ENCODE measurements at regions of chr17 and their contacts with region 1.

Region 1: DNA sequence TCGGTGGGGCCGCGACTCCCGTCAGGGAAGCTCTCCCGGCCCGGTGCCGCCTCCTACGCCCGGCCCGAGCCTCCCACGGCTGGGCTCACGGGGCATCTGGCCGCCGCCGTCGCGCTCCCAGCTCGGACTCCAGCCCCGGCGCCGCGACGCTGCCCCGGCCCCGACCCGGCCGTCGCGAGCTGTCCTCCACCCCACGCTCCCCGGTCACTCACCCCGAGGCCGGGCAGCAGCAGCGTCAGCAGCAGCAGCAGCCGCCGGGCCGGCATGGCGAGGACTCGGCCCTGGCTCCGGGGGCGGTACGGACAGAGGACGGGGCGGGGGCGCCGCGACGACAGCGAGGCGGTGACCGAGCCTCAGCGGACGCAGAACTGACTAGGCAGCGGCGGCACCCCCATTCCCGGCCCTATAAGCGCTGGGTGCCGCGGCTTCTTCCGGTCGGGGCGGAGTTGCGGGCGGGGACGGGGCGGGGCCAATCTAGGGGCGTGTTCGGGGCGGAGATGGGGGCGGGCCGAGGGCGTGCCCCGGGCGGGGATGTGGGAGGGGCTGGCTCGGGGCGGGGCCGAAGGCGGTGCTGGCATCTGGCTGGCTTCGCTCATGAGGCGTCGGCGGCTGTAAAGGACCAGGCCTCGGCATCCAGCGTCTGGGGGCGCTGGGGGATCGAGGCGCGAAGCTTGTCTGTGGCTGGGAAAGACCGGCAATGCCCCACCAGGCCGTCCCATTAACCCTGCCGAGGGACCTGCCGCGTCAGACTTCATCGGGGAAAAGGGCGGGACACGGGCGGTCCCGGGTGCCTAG is at the start of gene ERN1:
- DNase-seq: peak; percentile 82
- H3K4me3 ChIP-seq: peak within 1 kb of the TSS; percentile 68
- H3K27ac ChIP-seq: peak within 1 kb of the TSS; percentile 93
- H3K27me3 ChIP-seq: no peaks in the 10 kb centered on the region
- CTCF ChIP-seq: no peak
- polyA plus RNA-seq, gene ERN1: 4.5 and 4.7 TPM in 2 replicates

Region 2: GRCh38 chr17:63911657-63912426 is 218.1 kb before region 1 on chr17:
- CTCF ChIA-PET with region 1: interaction called, 31 read pairs
- POLR2A ChIA-PET with region 1: no interaction called
- DNase-seq: no peak
- H3K4me3 ChIP-seq: no peak overlapping the region
- H3K27ac ChIP-seq: no peak overlapping the region
- H3K27me3 ChIP-seq: peaks cover 32% of the 10 kb centered on the region
- CTCF ChIP-seq: peak; percentile 66

Region 3: GRCh38 chr17:64020056-64020766 is 109.8 kb before region 1 on chr17 and contains the start of gene ICAM2:
- CTCF ChIA-PET with region 1: interaction called, 698 read pairs
- POLR2A ChIA-PET with region 1: interaction called, 5 read pairs
- DNase-seq: no peak
- H3K4me3 ChIP-seq: 0 out of 2 replicates have a peak within 1 kb of the TSS, but pooled peaks have one; percentile 4
- H3K27ac ChIP-seq: no peak within 1 kb of the TSS
- H3K27me3 ChIP-seq: peaks cover 9% of the 10 kb centered on the region
- CTCF ChIP-seq: no peak
- polyA plus RNA-seq, gene ICAM2: 0.16 and 0.52 TPM in 2 replicates

Region 4: DNA sequence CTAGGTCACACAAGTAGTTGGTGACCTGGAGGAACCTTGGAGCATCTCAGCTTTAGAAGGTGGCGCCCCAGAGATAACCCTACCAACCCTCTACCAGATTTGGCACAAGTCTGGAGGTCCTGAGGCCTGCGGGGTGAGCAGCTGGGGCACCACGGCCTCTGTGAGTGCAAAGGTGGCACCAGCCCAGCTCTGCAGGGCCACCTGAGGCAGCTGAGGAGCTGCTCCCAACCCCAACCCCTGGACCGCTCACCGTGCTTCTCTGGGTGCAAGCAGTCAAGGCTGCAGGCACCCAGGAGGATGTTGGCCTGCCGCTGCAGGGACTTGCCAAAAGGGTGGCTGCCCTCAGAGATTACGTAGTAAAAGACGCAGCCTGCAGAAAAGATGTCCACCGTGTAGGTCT is 81.2 kb before region 1 on chr17:
- CTCF ChIA-PET with region 1: interaction called, 12 read pairs
- POLR2A ChIA-PET with region 1: no interaction called
- DNase-seq: no peak
- H3K4me3 ChIP-seq: no peak overlapping the region
- H3K27ac ChIP-seq: no peak overlapping the region
- H3K27me3 ChIP-seq: no peaks in the 10 kb centered on the region
- CTCF ChIP-seq: no peak

Region 5: GRCh38 chr17:64113006-64113405 is 17.0 kb before region 1 on chr17:
- CTCF ChIA-PET with region 1: interaction called, 10 read pairs
- POLR2A ChIA-PET with region 1: interaction called, 16 read pairs
- DNase-seq: no peak
- H3K4me3 ChIP-seq: no peak overlapping the region
- H3K27ac ChIP-seq: no peak overlapping the region
- H3K27me3 ChIP-seq: no peaks in the 10 kb centered on the region
- CTCF ChIP-seq: no peak

Region 6: DNA sequence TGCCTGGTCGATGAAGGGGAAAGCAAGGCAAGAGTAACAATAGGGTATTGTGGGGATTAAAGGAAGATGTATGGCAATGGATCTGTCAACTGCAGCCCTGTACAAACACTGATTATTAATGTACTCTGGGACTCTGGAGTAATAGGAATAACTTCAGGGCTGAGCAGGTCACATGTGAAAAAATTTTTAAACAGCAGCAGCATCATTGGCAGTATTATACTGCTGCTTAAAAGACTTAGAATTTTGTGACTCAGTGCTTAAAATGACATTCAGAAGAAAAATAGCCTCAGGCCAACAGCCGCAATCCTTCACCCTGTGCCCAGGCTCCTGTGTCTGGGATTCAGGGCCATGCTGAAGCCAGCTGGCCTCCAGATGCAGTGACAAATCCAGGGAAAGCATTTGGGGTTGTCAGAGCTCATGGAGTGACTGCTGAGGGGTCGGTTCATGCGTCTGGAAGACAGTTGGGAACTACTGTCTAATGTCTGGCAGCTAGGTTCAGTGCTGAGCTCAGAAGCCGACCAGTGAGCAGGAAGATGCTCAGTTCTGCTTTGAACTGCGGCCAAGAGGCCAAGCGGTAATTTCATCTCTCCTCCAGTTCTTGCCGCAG is 110.9 kb after region 1 on chr17:
- CTCF ChIA-PET with region 1: interaction called, 10 read pairs
- POLR2A ChIA-PET with region 1: no interaction called
- DNase-seq: peak; percentile 64
- H3K4me3 ChIP-seq: no peak overlapping the region; the same call in 1 of the 2 replicates
- H3K27ac ChIP-seq: peak overlapping the region; percentile 75
- H3K27me3 ChIP-seq: no peaks in the 10 kb centered on the region
- CTCF ChIP-seq: no peak

Region 7: DNA sequence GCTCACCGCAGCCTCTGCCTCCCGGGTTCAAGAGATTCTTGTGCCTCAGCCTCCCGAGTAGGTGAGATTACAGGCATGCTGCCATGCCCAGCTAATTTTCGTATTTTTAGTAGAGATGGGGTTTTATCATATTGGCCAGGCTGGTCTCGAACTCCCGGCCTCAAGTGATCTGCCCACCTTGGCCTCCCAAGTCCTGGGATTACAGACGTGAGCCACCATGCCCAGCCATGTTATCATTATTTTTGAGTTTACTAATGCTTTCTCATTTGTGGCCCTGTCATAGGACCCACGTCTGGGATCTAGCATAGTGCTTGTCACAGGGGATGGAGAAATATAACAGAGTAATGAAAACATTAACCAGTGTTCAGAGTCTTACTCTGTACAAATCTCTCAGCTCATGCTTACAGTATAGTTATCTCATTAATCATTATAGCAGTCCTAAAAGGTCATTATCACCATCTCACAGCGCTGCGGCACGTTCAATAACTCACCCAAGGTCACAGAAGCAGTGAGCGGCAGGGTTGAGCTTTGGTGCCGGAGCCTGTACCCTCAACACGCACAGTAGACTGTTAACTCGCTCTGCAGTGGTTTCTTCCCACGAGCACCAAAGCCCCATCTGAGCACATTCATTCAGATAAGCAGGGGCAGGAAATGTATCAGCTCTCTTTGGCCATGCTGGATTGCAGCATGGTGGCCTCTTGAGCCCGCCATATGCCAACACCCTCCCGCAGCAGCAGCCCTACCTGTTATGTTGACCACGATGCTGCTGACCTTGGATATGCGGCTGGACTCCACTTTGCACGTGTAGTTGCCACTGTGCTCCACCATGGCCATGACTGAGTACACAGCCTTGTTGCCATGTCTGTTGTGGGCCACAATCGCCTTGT is 239.3 kb after region 1 on chr17:
- CTCF ChIA-PET with region 1: no interaction called
- POLR2A ChIA-PET with region 1: no interaction called
- DNase-seq: no peak
- H3K4me3 ChIP-seq: no peak overlapping the region
- H3K27ac ChIP-seq: no peak overlapping the region
- H3K27me3 ChIP-seq: peaks cover 14% of the 10 kb centered on the region
- CTCF ChIP-seq: no peak